Common myeloid progenitor, CD34-positive (primary cell): ENCODE measurements at regions of chr5 and their contacts with region 1.

Region 1: DNA sequence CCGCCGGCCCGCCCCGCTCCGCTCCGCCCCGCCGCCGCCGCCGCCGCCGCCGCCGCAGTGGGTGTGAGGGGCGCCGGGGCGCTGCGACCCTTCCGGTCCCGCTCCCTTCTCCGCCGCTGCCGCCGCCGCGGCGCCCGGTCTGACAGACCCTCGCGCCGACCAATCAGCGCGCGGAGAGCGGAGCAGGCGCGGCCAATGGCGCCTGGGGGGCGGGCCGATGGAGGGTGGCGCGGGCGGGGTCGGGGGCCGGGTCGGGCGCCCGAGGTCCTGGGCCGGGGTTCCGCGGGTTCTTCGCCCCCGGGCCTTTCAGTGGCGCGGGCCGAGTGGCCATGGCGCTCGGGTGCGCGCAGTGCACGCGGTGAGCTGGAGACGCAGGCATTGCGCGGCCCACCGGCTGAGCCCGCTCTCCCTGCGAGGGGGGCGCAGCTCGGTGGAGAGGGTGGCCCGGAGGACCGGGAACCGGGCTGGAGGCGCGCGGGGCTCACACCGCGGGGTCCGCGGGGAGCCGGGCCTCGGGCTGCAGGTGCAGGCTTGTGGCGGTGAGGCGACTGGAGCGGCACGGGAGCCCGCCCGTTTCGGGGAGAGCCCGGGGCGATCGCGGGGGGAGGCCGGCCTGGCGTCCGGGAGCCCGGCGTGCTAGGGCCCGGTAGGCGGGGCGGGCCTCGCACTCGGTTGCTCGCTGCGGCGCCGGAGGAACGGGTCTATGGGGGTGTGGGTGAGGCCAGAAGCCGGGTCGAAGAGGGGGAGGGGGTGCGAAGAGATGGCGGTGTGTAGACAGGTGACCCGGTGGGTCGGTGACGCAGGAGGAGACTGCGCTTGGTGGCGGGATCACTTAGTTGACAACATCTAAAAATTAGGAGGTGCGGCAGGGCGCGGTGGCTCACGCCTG is at the start of gene MAPK9:
- DNase-seq: peak; percentile 80 to 85 (median 85)
- H3K4me3 ChIP-seq: peak within 1 kb of the TSS; percentile 69 to 97 (median 82)
- H3K27ac ChIP-seq: peak within 1 kb of the TSS; percentile 40 to 66
- H3K4me1 ChIP-seq: peaks cover 7 to 36% (median 33%) of the 10 kb centered on the region in 4 experiments
- H3K27me3 ChIP-seq: no peaks in the 10 kb centered on the region

Region 2: GRCh38 chr5:180304431-180305375 is 12.5 kb after region 1 on chr5:
- CTCF ChIA-PET with region 1: interaction called, 26 read pairs
- POLR2A ChIA-PET with region 1: no interaction called
- DNase-seq: no peak
- H3K4me3 ChIP-seq: no peak overlapping the region
- H3K27ac ChIP-seq: no peak overlapping the region
- H3K4me1 ChIP-seq: no peaks in the 10 kb centered on the region
- H3K27me3 ChIP-seq: peaks cover 0 to 3% (median 0%) of the 10 kb centered on the region in 5 experiments

Region 3: DNA sequence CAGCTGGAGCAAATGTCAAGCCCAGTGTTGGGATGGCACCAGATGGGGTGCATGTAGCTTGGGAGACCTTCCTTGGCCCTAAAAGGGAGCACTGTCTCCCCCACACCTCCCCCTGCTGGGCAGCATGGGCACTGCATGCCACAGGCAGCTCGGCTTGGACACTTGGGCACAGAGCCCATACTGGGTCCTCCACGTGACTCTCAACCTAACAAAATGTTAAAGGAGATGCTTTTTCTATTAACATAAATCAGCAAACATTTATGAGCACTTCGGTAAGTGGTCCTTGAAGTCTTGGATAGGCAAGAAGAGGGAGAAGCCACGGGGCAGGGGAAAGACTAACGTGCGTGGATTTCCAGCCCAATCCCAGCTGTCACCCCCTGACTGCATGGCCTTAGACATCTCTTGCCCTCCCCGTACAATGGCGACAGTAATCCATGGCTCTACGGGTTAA is 23.6 kb after region 1 on chr5:
- CTCF ChIA-PET with region 1: interaction called, 116 read pairs
- POLR2A ChIA-PET with region 1: interaction called, 3 read pairs
- DNase-seq: peak; percentile 63 to 83 (median 75)
- H3K4me3 ChIP-seq: no peak overlapping the region
- H3K27ac ChIP-seq: no peak overlapping the region
- H3K4me1 ChIP-seq: peaks cover 0 to 5% (median 0%) of the 10 kb centered on the region in 4 experiments
- H3K27me3 ChIP-seq: no peaks in the 10 kb centered on the region

Region 4: DNA sequence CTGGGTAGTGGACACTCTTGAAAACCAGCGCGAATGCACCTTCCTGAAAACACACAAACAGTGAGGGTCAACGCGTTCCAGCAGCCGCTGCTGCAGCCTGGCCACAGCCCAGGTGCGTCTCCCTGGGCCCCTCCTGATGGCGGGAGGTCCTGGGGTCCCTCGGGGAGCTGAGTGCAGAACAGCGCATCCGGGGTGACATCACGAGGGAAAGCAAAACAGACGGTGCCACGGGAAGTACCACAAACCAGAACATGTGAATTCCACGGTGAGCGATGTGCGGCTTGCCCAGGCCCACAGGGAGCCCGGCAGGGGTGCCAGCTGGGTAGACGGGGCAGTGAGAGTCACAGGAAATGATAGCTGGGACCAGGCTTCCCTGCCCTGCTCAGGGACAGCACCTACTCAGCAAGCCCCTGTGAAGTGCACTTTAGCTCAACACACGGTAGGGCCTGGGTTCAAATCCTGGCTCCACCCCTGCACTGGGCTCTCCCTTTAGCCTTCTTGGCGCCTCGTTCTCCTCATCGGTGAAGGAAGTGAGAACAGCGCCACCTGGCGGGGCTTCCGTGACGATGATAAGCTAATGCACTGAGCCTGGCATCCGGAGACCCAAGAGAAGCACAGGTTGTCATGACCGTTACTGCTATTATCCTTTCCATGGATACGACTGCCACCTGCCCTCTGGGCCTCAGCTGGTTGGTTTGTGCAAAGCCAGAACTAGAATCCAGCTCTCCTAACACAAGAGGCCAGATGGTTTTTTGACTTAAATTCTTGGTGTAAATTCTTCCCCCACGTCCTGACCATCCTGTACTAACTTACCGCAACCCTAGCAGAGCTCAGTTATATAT is 36.3 kb after region 1 on chr5:
- CTCF ChIA-PET with region 1: interaction called, 34 read pairs
- POLR2A ChIA-PET with region 1: interaction called, 5 read pairs
- DNase-seq: peak; percentile 76 to 90 (median 85)
- H3K4me3 ChIP-seq: no peak overlapping the region
- H3K27ac ChIP-seq: no peak overlapping the region
- H3K4me1 ChIP-seq: peaks cover 0 to 3% (median 0%) of the 10 kb centered on the region in 4 experiments
- H3K27me3 ChIP-seq: peaks cover 0 to 14% (median 4%) of the 10 kb centered on the region in 5 experiments

Region 5: GRCh38 chr5:180470966-180471582 is 178.9 kb after region 1 on chr5:
- CTCF ChIA-PET with region 1: interaction called, 33 read pairs
- POLR2A ChIA-PET with region 1: no interaction called
- DNase-seq: peak; percentile 61 to 79 (median 73)
- H3K4me3 ChIP-seq: no peak overlapping the region
- H3K27ac ChIP-seq: no peak overlapping the region
- H3K4me1 ChIP-seq: no peaks in the 10 kb centered on the region
- H3K27me3 ChIP-seq: peaks cover 0 to 7% (median 6%) of the 10 kb centered on the region in 5 experiments

Region 6: GRCh38 chr5:180555168-180555921 is 263.2 kb after region 1 on chr5:
- CTCF ChIA-PET with region 1: no interaction called
- POLR2A ChIA-PET with region 1: no interaction called
- DNase-seq: peak in 1 of 3 donors; percentile 13
- H3K4me3 ChIP-seq: no peak overlapping the region
- H3K27ac ChIP-seq: peak overlapping the region in 1 of 2 experiments; percentile 66
- H3K4me1 ChIP-seq: no peaks in the 10 kb centered on the region
- H3K27me3 ChIP-seq: no peaks in the 10 kb centered on the region